ENCODE measurements at regions of chr3 and their contacts with region 1.

Region 1: GRCh38 chr3:105868742-105869530 is at the start of gene CBLB:
- DNase-seq: peak; percentile 97
- H3K4me3 ChIP-seq: peak within 1 kb of the TSS; percentile 94 to 97 (median 97)
- H3K27ac ChIP-seq: peak within 1 kb of the TSS; percentile 95
- H3K4me1 ChIP-seq: peaks cover 13% of the 10 kb centered on the region
- H3K27me3 ChIP-seq: no peaks in the 10 kb centered on the region
- CTCF ChIP-seq: no peak
- total RNA-seq, gene CBLB: 39.3 to 59.4 TPM

Region 2: GRCh38 chr3:105686278-105686897 is 182.5 kb before region 1 on chr3:
- CTCF ChIA-PET with region 1: no interaction called
- dilution Hi-C with region 1: no loop called
- in situ Hi-C with region 1: no loop called
- intact Hi-C with region 1: loop called (anchors 2 kb)
- DNase-seq: no peak
- H3K4me3 ChIP-seq: no peak overlapping the region
- H3K27ac ChIP-seq: no peak overlapping the region
- H3K4me1 ChIP-seq: no peaks in the 10 kb centered on the region
- H3K27me3 ChIP-seq: no peaks in the 10 kb centered on the region
- CTCF ChIP-seq: peak; percentile 76 to 82

Region 3: DNA sequence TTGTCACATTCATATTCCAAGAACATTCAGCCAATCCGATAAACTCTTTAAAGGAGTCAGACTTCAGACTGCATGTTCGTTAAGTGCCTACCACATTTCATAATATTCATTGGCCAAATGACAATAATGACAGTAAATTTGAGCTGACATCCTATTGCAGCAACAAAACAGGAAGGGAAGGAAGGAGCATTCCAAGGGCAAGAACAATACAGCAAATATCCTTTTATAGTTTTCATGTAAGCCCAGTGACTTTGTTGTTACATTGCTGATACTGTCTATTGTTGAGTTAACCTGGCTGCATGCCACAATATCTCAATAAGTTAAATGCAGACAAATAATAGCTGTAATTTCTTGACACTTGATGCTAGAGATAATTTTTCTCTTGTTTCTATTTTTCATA is 16.3 kb after region 1 on chr3:
- CTCF ChIA-PET with region 1: no interaction called
- dilution Hi-C with region 1: no loop called
- in situ Hi-C with region 1: no loop called
- intact Hi-C with region 1: no loop called
- DNase-seq: no peak
- H3K4me3 ChIP-seq: no peak overlapping the region
- H3K27ac ChIP-seq: no peak overlapping the region
- H3K4me1 ChIP-seq: peaks cover 6% of the 10 kb centered on the region
- H3K27me3 ChIP-seq: no peaks in the 10 kb centered on the region
- CTCF ChIP-seq: no peak

Region 4: DNA sequence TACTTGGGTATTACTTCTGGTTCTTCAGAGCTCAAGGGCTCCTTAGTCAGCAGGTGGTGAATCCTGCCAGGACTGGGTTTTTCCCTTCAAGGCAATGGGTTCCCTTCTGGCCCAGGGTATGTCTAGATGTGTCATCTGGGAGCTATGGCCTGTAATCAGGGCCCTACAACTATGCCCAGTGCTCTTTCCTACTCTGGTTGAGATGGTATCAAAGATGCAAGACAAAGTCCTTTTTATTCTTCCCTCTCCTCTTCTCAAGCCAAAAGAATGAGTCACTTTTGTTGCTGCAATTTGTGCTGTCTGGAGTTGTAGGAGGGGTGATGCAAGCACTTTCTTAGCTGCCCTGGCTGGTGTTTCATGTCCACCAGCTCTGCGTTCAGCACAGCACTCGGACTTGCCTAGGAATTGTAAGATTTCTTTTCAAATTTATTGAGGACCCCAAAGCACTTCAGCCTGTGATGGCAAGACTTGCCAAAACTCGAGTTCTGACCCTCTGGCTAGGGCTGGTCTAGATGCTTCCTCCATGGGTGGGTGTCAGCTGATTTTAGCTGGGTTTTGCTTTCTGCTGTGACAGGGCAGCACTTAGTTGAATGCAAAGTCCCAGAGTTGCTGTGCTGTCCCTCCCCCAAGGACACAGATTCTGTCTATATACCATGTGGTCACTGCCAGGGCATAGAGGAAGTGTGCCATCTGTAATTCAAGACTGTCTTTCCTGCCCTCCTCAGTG is 129.0 kb after region 1 on chr3:
- CTCF ChIA-PET with region 1: no interaction called
- dilution Hi-C with region 1: no loop called
- in situ Hi-C with region 1: no loop called
- intact Hi-C with region 1: loop called (anchors 1 kb)
- DNase-seq: peak; percentile 100
- H3K4me3 ChIP-seq: peak overlapping the region; percentile 29 to 35 (median 33)
- H3K27ac ChIP-seq: peak overlapping the region; percentile 96
- H3K4me1 ChIP-seq: peaks cover 22% of the 10 kb centered on the region
- H3K27me3 ChIP-seq: no peaks in the 10 kb centered on the region
- CTCF ChIP-seq: no peak

Region 5: DNA sequence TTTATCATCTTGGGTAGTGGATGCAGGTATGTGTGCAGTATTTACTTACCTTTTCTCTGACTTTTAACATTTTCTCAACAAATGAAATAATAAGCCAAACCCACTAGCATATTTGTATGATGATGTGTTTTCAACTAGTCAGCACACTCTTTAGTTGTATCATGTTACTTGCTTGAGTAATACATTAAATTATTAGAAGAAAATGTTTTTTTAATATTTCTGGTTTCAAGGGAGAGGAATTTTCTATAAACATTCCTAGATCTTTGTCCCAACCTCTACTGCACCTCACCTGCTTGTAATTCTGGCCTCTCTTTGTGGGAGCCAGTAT is 161.6 kb after region 1 on chr3:
- CTCF ChIA-PET with region 1: no interaction called
- dilution Hi-C with region 1: no loop called
- in situ Hi-C with region 1: no loop called
- intact Hi-C with region 1: loop called (anchors 1 kb)
- DNase-seq: peak; percentile 49
- H3K4me3 ChIP-seq: no peak overlapping the region
- H3K27ac ChIP-seq: peak overlapping the region; percentile 58
- H3K4me1 ChIP-seq: peaks cover 11% of the 10 kb centered on the region
- H3K27me3 ChIP-seq: no peaks in the 10 kb centered on the region
- CTCF ChIP-seq: no peak

Region 6: GRCh38 chr3:106206146-106206545 is 337.2 kb after region 1 on chr3:
- CTCF ChIA-PET with region 1: no interaction called
- dilution Hi-C with region 1: no loop called
- in situ Hi-C with region 1: no loop called
- intact Hi-C with region 1: loop called (anchors 5 kb)
- DNase-seq: no peak
- H3K4me3 ChIP-seq: no peak overlapping the region
- H3K27ac ChIP-seq: no peak overlapping the region
- H3K4me1 ChIP-seq: no peaks in the 10 kb centered on the region
- H3K27me3 ChIP-seq: no peaks in the 10 kb centered on the region
- CTCF ChIP-seq: no peak

Region 7: DNA sequence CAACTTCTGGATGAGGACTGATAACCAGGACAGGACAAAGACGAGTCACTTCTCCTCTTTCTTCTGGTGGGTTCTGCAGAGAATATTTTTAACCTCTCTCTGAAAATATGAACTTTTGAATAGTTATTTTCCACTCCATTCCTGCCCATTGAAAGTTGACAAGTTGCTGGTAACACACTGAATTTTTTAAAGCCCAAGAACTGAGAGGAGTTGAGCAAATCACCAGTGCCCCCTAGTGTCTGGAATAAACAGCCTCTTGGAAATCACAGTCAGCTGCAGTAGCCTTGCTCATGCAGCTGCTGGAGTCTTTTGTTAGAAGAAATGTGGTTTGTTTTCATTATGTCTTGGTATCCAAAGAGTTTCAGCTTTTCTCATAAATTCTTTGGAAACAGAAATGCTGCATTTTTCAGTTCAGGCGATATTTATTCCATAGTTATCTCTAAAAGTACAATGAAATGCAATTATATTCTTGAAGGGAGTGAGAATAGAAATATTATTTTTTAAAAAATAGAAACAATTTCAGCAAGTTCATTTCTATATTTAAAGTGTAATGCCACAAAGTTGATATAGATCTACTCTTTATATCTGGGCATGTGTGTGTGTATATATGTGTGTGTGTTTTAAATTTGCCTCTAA is 740.8 kb after region 1 on chr3:
- CTCF ChIA-PET with region 1: no interaction called
- dilution Hi-C with region 1: no loop called
- in situ Hi-C with region 1: no loop called
- intact Hi-C with region 1: loop called (anchors 5 kb)
- DNase-seq: peak; percentile 62
- H3K4me3 ChIP-seq: no peak overlapping the region
- H3K27ac ChIP-seq: no peak overlapping the region
- H3K4me1 ChIP-seq: peaks cover 10% of the 10 kb centered on the region
- H3K27me3 ChIP-seq: no peaks in the 10 kb centered on the region
- CTCF ChIP-seq: peak; percentile 90 to 92

Measured in mammary epithelial cell (primary cell).